Common myeloid progenitor, CD34-positive (primary cell): ENCODE measurements at regions of chr13 and their contacts with region 1.

Region 1: DNA sequence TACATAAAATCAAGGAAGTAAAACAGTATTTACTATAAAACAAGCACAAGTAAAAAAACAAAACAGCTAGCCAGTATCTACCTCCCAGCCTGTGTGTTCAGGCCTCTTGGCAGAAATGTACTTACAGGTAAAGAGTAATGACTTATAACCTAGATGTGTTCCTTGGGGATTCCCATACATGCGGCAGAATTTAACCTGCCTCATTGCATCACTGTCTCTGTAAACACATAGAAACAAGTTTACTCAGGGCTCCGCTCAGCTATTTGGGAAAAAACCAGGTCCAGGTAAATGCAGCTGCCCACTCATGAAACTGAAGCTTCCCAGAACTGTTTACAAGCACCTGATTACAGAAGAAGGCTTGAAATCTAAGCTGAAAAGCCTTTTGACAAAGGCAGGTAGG is 50.7 kb upstream of the SERP2 start:
- DNase-seq: no peak
- H3K4me3 ChIP-seq: no peak overlapping the region
- H3K27ac ChIP-seq: no peak overlapping the region
- H3K4me1 ChIP-seq: no peaks in the 10 kb centered on the region
- H3K27me3 ChIP-seq: no peaks in the 10 kb centered on the region

Region 2: DNA sequence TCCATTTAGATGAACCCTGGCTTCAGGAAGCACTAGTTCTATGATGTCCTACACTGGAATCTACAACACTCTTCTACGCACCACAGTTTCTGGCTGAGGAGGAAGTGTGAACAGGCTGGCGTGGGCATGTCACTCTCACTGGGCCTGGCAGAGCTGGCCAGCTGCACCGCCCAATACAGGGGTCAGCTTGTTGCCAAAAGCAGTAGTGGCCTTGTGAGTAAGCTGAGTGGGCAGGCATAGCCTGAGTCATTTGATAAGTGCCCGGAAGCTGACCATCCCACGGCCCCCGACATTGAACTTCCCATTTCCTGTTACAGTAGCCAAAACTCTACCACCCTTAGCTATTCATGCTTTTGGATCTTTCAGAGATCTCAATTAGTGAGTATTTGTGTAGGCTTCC is 190.2 kb before region 1 on chr13:
- CTCF ChIA-PET with region 1: no interaction called
- POLR2A ChIA-PET with region 1: no interaction called
- DNase-seq: no peak
- H3K4me3 ChIP-seq: no peak overlapping the region
- H3K27ac ChIP-seq: no peak overlapping the region
- H3K4me1 ChIP-seq: peaks cover 0 to 5% (median 0%) of the 10 kb centered on the region in 4 experiments
- H3K27me3 ChIP-seq: no peaks in the 10 kb centered on the region

Region 3: GRCh38 chr13:44334751-44335150 is 11.8 kb after region 1 on chr13:
- CTCF ChIA-PET with region 1: interaction called, 11 read pairs
- POLR2A ChIA-PET with region 1: no interaction called
- DNase-seq: no peak
- H3K4me3 ChIP-seq: no peak overlapping the region
- H3K27ac ChIP-seq: no peak overlapping the region
- H3K4me1 ChIP-seq: peaks cover 0 to 27% (median 20%) of the 10 kb centered on the region in 4 experiments
- H3K27me3 ChIP-seq: no peaks in the 10 kb centered on the region

Region 4: GRCh38 chr13:44373601-44374348 is 50.8 kb after region 1 on chr13 and contains the start of gene SERP2:
- CTCF ChIA-PET with region 1: no interaction called
- POLR2A ChIA-PET with region 1: no interaction called
- DNase-seq: peak in 1 of 3 donors; percentile 36
- H3K4me3 ChIP-seq: peak within 1 kb of the TSS; percentile 13 to 76 (median 43)
- H3K27ac ChIP-seq: no peak within 1 kb of the TSS
- H3K4me1 ChIP-seq: peaks cover 1 to 47% (median 22%) of the 10 kb centered on the region in 4 experiments
- H3K27me3 ChIP-seq: no peaks in the 10 kb centered on the region